Dorsolateral prefrontal cortex (tissue), 120 donors: ENCODE measurements at regions of chr16 and their contacts with region 1.

Region 1: GRCh38 chr16:57704905-57705852 is 10.6 kb downstream of the DRC7 start:
- DNase-seq: no peak
- H3K4me3 ChIP-seq: no peak overlapping the region
- H3K27ac ChIP-seq: no peak overlapping the region
- H3K27me3 ChIP-seq: no peaks in the 10 kb centered on the region
- CTCF ChIP-seq: no peak

Region 2: GRCh38 chr16:57658878-57659674 is 46.1 kb before region 1 on chr16:
- intact Hi-C with region 1: loop called in 1 of 2 experiments (anchors 5 kb)
- DNase-seq: no peak
- H3K4me3 ChIP-seq: no peak overlapping the region
- H3K27ac ChIP-seq: no peak overlapping the region
- H3K27me3 ChIP-seq: no peaks in the 10 kb centered on the region
- CTCF ChIP-seq: no peak